GM12878 (cell line): ENCODE measurements at regions of chr15 and their contacts with region 1.

Region 1: GRCh38 chr15:96893159-96893906 is 562.8 kb downstream of the NR2F2 start:
- DNase-seq: no peak
- ATAC-seq: peak; percentile 79
- H3K4me3 ChIP-seq: no peak overlapping the region
- H3K27ac ChIP-seq: no peak overlapping the region
- H3K4me1 ChIP-seq: no peaks in the 10 kb centered on the region
- H3K27me3 ChIP-seq: no peaks in the 10 kb centered on the region
- CTCF ChIP-seq: peak; percentile 16 to 69 (median 56); a peak in 5 of 6 replicates
- EP300 ChIP-seq: no peak
- POLR2A ChIP-seq: no peak
- RAD21 ChIP-seq: peak; percentile 34; the same call in 1 of the 2 replicates

Region 2: DNA sequence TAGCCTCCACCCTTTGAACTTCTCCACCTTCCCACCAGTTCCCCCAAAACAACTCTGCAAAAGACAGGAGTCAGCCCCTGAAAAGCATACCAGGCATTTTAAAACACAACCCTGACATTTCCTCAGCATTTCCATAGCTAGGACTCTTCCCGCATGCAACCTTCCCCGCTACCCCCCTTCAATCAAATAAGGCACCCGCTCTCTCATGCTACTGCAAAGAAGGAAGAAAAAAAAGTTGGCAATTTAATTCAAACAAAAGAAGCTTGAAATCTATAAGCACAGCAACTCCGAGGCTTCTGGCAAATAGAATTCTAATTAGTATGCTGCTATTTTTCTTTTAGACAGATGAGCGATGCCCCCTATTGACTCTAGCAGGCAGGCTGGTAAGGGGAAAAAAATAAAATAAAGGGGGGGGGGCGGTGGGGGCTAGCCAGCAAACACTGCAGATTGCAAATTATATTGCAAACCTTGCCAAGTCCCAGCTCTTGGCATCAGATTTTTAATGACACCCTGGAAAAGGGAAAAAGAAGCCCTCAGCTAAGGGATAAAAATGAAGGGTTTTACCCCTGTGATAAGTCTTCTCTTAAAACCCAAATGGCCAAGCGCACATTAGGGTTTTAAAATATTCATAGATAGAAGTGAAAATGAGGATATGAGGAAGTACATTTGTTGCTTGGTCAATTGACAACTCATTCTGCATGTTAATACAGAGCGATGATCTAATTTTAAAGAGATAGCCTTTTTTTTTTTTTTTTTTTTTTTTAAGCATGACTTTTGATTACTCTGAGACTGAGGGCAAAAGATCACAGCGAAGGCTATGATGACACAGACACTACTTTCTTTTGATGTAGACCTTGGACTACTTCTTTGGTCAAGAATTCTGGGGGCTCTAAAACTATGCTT is 307.6 kb before region 1 on chr15:
- CTCF ChIA-PET with region 1: interaction called, 3 read pairs
- POLR2A ChIA-PET with region 1: no interaction called
- RAD21 ChIA-PET with region 1: interaction called, 3 read pairs
- SMC1A ChIA-PET with region 1: interaction called, 4 read pairs
- in situ Hi-C with region 1: no loop called
- intact Hi-C with region 1: loop called (anchors 10 kb)
- DNase-seq: no peak
- ATAC-seq: peak; percentile 73
- H3K4me3 ChIP-seq: no peak overlapping the region
- H3K27ac ChIP-seq: no peak overlapping the region
- H3K4me1 ChIP-seq: no peaks in the 10 kb centered on the region
- H3K27me3 ChIP-seq: no peaks in the 10 kb centered on the region
- CTCF ChIP-seq: peak in 2 of 3 experiments; percentile 10 to 35; a peak in 2 of 6 replicates
- EP300 ChIP-seq: no peak
- POLR2A ChIP-seq: no peak
- RAD21 ChIP-seq: no peak